Activated CD4-positive, alpha-beta memory T cell treated with anti-CD3 and anti-CD28 coated beads for 36 hours (primary cell): ENCODE measurements at regions of chr11 and their contacts with region 1.

Region 1: DNA sequence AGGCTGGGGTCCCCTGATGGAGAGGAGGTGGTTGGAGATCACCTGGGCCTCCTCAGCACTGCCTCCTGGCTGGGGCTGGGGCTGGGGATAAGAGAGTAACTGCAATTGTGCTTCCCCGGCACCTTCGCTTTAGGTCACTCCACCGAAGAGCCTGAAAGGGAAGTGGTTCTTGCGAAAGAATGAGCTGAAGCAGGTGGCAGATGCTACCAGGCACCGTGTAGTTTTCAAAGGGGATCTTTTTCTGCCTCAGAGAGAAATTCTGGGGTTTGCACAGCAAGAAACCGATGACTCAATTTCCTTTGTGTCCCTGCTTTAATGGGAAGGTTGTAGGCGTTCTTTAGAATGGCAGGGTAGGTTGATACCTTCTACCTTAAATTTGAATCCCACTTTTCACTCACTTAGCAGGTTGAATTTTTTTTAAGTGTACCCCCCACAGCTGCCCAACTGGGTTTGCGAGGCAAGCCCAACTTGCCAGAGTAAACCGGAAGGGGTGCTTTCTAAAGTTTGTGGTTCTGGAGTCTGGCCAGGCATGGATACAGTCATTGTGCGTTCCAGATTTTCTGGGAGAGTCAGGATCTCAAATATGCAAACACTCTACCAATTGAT is 5.3 kb downstream of the CD44 start:
- DNase-seq: peak; percentile 85
- H3K4me3 Mint-ChIP-seq: peak overlapping the region; percentile 66
- H3K27ac Mint-ChIP-seq: peak overlapping the region; percentile 99
- H3K4me1 Mint-ChIP-seq: peaks cover 69% of the 10 kb centered on the region
- H3K27me3 Mint-ChIP-seq: no peaks in the 10 kb centered on the region

Region 2: DNA sequence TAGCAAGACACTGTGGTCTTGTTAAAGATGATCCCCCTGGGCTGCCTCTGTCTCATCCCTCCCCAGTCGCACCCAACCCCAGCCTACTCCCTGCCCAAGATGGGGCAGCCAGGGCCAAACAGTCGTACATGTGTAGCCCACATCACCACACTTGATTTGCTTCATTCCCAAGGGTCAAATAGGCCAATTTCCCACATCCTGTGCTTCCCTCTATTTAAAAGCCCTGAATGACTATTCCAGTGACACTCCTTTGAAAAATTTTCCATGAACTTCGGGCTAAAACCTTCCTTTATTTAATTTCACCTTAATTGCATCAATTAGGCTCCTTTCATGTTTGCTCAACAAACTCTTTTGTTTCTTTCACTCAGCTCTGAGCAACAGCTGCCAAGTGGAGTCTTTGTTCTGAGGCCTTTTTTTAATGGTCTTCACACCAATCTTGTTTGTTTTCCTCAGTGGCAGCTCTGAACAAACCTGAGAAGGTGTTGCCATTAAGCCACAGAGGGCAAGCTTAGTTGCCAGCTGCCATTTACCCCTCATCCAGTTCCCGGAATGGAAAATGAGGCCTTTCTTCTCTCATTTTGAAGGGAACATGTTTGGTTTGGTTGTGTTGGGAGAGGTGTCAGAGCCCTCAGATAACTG is 354.9 kb before region 1 on chr11:
- CTCF ChIA-PET with region 1: no interaction called
- POLR2A ChIA-PET with region 1: no interaction called
- intact Hi-C with region 1: no loop called
- DNase-seq: no peak
- H3K4me3 Mint-ChIP-seq: no peak overlapping the region
- H3K27ac Mint-ChIP-seq: no peak overlapping the region
- H3K4me1 Mint-ChIP-seq: no peaks in the 10 kb centered on the region
- H3K27me3 Mint-ChIP-seq: peaks cover 10% of the 10 kb centered on the region

Region 3: GRCh38 chr11:34916015-34916842 is 228.0 kb before region 1 on chr11 and contains the starts of genes APIP and PDHX:
- CTCF ChIA-PET with region 1: interaction called, 6 read pairs
- POLR2A ChIA-PET with region 1: no interaction called
- intact Hi-C with region 1: loop called (anchors 2 kb)
- DNase-seq: peak; percentile 98
- H3K4me3 Mint-ChIP-seq: peak within 1 kb of the TSS; percentile 91
- H3K27ac Mint-ChIP-seq: peak within 1 kb of the TSS; percentile 88
- H3K4me1 Mint-ChIP-seq: peaks cover 37% of the 10 kb centered on the region
- H3K27me3 Mint-ChIP-seq: no peaks in the 10 kb centered on the region
- total RNA-seq, gene APIP: 31.2 to 32.9 TPM
- total RNA-seq, gene PDHX: 34.5 to 35.5 TPM

Region 4: DNA sequence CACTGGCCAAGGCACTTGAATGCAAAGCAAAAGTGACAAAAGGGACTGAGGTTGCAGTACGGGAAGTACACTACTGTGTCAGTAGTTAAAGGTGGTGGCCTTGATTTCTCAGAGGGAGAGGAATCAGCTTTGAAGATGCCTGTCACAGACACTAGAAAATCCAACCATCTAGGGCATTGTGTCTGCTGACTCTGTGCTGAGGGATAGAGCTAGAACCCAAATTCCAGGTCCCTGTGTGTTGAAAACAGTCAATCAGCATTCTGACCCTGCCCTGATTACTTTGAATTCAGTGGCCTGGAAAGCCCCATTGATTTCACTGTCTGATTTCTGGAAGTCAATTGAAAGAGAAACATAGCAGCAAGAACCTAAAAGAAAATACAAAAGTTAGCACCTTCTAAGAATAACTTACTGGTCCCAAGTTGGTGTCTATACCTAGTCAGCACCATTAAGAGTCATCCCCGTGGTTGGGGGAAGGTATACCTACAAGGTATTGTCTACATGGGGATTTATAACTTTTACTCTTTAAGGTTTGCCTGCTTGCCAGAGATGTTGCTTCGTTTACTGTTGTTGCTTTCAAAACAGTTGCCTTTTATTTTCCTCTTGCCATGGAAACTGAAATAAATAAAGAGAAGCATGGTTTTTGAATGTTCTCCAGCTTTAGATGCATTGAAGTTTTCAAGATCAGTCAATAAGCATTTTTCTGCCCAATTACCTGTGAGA is 130.6 kb before region 1 on chr11:
- CTCF ChIA-PET with region 1: interaction called, 4 read pairs
- POLR2A ChIA-PET with region 1: interaction called, 15 read pairs
- intact Hi-C with region 1: loop called (anchors 1 kb)
- DNase-seq: peak; percentile 53
- H3K4me3 Mint-ChIP-seq: peak overlapping the region; percentile 58
- H3K27ac Mint-ChIP-seq: peak overlapping the region; percentile 92
- H3K4me1 Mint-ChIP-seq: peaks cover 44% of the 10 kb centered on the region
- H3K27me3 Mint-ChIP-seq: peaks cover 4% of the 10 kb centered on the region

Region 5: DNA sequence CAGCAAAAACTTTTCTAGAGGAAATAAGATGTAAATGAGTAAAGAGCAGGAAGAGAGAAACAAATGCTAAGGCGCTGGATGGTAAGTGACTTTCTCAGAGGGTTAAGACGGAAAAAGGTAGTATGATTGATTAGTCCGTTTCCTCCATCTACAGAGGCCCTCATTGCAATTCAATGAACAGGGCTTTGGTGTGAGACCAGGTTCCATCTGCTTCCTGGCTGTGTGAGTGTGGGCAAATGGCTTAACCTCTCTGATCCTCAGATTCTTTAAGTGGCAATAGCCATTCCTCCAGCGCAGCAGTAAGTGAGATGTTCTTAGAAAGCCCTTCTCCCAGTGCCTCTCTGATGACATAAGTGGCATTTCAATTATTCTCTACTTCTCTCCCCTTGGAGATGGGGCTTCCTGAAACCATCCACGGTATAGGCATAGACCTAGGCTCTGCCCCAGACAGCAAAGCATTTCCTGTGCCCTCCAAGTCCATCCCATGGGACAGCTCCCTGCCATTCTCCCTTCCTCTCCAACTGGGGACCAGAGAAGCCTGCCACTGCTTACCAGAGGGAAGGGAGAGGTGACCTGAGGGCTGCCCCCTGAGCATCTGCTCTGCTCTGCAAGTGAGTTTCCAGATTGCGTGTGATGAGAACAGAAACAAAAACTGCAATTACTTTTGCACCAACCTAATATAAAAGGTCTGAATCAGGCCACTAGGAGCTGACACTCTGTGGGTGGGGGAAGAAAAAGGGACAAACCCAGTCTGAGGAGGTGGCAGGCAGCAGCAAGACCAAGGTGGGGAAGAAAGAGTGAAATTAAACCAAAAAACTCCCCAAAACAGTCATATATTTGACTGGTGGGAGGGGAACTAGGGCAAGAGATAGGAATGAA is 18.0 kb before region 1 on chr11:
- CTCF ChIA-PET with region 1: interaction called, 9 read pairs
- POLR2A ChIA-PET with region 1: interaction called, 11 read pairs
- intact Hi-C with region 1: loop called (anchors 1 kb)
- DNase-seq: peak; percentile 73
- H3K4me3 Mint-ChIP-seq: peak overlapping the region; percentile 41
- H3K27ac Mint-ChIP-seq: peak overlapping the region; percentile 82
- H3K4me1 Mint-ChIP-seq: peaks cover 65% of the 10 kb centered on the region
- H3K27me3 Mint-ChIP-seq: no peaks in the 10 kb centered on the region

Region 6: GRCh38 chr11:35173011-35173511 is 28.8 kb after region 1 on chr11:
- CTCF ChIA-PET with region 1: interaction called, 16 read pairs
- POLR2A ChIA-PET with region 1: interaction called, 65 read pairs
- intact Hi-C with region 1: loop called (anchors 1 kb)
- DNase-seq: no peak
- H3K4me3 Mint-ChIP-seq: peak overlapping the region; percentile 40
- H3K27ac Mint-ChIP-seq: peak overlapping the region; percentile 82
- H3K4me1 Mint-ChIP-seq: peaks cover 95% of the 10 kb centered on the region
- H3K27me3 Mint-ChIP-seq: no peaks in the 10 kb centered on the region

Region 7: DNA sequence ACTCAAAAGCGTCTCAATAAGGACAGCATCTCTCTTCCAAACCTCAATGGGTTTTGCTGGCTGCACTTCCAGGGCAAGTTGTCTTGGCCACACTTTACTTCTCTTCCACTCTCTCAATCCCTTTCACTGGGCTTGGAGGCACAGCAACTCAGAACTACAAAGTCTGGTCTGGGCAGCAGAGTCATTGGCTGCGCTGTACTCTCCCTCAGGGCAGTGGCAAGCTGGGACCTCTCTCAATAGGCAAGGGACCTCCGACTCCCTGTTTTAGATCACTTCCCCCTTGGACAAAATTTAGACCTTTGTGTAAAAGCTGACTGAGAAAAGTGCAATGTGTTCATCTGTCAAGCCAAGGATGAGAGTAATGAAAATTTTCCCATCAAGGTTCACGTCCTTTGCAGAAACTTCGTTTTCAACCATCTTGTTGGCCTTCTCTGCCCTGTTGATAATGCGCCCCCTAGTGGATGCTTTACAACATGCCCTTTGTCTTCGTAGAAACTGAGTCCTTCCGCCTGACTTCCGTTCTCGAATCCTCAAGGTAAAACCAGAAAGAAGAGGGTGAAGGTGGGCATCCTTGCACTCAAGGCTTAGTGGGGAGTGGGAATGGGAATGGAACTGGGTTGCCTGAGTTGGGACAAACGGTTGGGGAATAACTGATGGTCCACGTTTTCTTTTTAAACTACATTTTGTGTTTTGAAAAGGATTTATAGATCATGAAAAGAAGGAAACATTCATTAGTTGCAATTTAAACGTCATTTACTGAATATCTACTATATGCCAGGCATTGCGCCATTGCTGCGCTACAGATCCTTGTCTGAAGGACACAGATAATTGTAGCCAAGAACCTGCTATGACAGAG is 93.8 kb after region 1 on chr11:
- CTCF ChIA-PET with region 1: interaction called, 4 read pairs
- POLR2A ChIA-PET with region 1: interaction called, 3 read pairs
- intact Hi-C with region 1: loop called (anchors 1 kb)
- DNase-seq: peak; percentile 68
- H3K4me3 Mint-ChIP-seq: no peak overlapping the region
- H3K27ac Mint-ChIP-seq: no peak overlapping the region
- H3K4me1 Mint-ChIP-seq: peaks cover 72% of the 10 kb centered on the region
- H3K27me3 Mint-ChIP-seq: no peaks in the 10 kb centered on the region

Region 8: DNA sequence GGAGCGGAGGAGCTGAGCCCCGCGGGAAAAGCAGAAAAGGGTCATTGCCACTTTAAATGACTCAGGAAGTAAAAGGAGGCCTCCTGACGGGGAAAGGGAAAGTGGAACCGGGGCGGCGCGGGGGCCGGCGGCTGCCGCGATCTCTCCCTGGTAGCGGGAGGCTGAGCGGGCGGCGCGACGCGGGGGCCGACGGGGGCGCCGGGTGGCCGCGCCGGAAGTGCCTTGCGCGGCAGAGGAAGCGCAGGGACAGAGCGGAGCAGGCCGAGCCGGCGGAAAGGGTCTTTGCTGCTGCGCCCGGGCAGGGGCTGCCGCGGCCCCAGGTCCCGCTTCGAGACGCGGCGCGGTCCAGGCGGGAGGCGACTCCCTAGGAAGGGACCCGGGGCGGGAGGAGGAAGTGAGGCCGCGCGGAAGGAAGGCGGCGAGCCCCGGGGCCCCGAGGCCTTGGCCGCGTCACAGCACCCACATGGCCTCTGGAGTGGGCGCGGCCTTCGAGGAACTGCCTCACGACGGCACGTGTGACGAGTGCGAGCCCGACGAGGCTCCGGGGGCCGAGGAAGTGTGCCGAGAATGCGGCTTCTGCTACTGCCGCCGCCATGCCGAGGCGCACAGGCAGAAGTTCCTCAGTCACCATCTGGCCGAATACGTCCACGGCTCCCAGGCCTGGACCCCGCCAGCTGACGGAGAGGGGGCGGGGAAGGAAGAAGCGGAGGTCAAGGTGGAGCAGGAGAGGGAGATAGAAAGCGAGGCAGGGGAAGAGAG is 518.6 kb after region 1 on chr11 and contains the start of gene TRIM44:
- CTCF ChIA-PET with region 1: no interaction called
- POLR2A ChIA-PET with region 1: no interaction called
- intact Hi-C with region 1: loop called (anchors 10 kb)
- DNase-seq: peak; percentile 91
- H3K4me3 Mint-ChIP-seq: peak within 1 kb of the TSS; percentile 94
- H3K27ac Mint-ChIP-seq: peak within 1 kb of the TSS; percentile 94
- H3K4me1 Mint-ChIP-seq: peaks cover 43% of the 10 kb centered on the region
- H3K27me3 Mint-ChIP-seq: peaks cover 5% of the 10 kb centered on the region
- total RNA-seq, gene TRIM44: 27.3 to 30.0 TPM